ENCODE measurements at regions of chr19 and their contacts with region 1.

Region 1: GRCh38 chr19:36605101-36605876 is at the start of gene ZNF382:
- DNase-seq: peak; percentile 85
- ATAC-seq: peak; percentile 80
- H3K4me3 Mint-ChIP-seq: peak within 1 kb of the TSS; percentile 97
- H3K27ac Mint-ChIP-seq: peak within 1 kb of the TSS; percentile 97
- H3K4me1 Mint-ChIP-seq: peaks cover 28% of the 10 kb centered on the region
- H3K27me3 Mint-ChIP-seq: no peaks in the 10 kb centered on the region
- CTCF ChIP-seq: no peak
- total RNA-seq, gene ZNF382: 11.5 and 14.4 TPM in 2 replicates

Region 2: DNA sequence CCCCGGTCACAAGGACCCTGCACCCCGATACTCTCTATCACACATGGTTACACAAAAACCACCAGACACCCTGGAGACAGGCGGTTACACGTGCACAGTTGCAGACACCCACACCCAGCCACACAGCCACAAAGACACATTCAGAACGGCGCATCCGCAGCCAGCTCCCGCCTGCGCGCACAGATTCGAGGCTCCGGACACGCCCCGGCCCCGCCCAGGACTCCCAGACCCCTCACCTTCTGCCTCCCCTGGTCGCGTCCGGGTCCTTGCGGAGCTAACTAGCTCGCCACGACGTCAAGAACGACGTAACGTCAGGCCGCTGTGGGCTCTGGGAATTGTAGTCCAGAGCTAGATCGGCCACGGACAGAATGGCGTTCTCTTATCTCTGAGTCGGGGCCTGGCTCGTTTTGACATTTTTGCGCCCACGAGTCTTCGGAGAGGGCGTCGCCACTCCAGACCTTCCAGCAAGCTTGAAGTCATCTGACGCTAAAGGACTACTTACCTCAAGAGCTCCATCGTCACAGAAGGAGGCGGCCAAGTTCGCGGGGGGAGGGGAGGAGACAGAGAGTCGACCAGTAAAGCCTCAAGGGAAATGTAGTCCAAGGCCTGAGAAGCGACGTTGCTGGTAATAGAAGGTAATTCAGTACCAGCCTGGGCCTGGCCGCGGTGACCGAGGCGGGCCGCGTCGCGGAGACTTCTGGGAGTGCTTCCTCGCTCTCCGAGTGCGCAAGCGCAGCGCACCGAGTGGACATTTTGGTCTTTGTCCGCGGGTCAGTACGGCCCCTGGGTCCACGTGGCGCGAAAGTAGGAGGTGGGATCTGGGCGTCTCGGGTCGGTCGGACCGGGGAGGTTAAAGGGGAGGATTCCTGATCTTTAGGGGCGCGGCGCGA is 390.7 kb before region 1 on chr19 and contains the starts of genes ZNF146 and ZNF565:
- CTCF ChIA-PET with region 1: no interaction called
- POLR2A ChIA-PET with region 1: interaction called, 12 read pairs
- intact Hi-C with region 1: no loop called
- DNase-seq: peak; percentile 90
- ATAC-seq: peak; percentile 90
- H3K4me3 Mint-ChIP-seq: no peak within 1 kb of the TSS
- H3K27ac Mint-ChIP-seq: no peak within 1 kb of the TSS
- H3K4me1 Mint-ChIP-seq: peaks cover 29% of the 10 kb centered on the region
- H3K27me3 Mint-ChIP-seq: no peaks in the 10 kb centered on the region
- CTCF ChIP-seq: no peak
- total RNA-seq, gene ZNF146: 57.8 and 63.2 TPM in 2 replicates
- total RNA-seq, gene ZNF565: 2.3 and 3.2 TPM in 2 replicates

Region 3: DNA sequence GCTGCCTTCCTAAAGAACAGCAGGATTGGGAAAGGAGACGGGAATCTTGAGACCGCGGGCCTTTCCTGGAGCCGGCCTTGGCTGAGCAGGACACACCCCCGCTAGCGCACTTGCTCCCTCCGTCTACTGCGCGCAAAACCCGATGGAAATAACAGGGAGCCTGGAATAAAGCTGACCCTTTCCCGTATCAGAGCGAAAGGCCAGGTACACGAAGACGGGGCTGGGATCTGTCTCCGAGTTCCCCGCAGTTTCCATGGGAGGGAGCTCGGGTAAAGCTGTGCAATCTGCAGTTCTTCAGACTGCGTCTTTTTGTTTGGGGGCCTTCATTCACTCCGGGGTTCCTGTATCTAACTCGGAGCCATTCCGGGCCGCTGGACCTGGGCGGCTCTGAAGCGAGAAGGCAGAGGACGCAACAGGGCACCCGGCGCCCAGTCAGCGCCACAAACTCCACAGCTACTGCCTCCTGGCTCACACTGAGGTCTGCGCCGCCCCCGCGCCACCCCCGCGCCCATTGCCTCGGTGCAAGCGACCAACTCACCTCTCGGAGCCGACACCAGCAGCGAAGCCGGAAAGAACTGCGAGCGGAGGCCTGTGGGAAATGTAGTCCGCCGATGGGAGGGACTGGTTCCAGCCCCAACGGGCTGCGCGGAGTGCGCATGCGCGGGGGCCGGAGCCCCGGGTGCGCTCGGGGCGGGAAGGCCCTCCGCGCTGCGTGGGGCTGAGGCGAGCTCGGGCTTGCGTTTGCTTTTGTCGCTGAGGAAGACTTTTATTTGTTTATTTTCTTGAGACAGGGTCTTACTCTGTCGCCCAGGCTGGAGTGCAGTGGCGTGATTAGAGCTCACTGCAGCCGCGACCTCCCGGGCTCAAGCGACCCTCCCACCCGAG is 226.4 kb before region 1 on chr19 and contains the start of gene ZFP14:
- CTCF ChIA-PET with region 1: no interaction called
- POLR2A ChIA-PET with region 1: interaction called, 9 read pairs
- intact Hi-C with region 1: loop called (anchors 1 kb)
- DNase-seq: peak; percentile 92
- ATAC-seq: peak; percentile 99
- H3K4me3 Mint-ChIP-seq: peak within 1 kb of the TSS; percentile 94
- H3K27ac Mint-ChIP-seq: peak within 1 kb of the TSS; percentile 96
- H3K4me1 Mint-ChIP-seq: peaks cover 21% of the 10 kb centered on the region
- H3K27me3 Mint-ChIP-seq: no peaks in the 10 kb centered on the region
- CTCF ChIP-seq: no peak
- total RNA-seq, gene ZFP14: 7.7 and 10.4 TPM in 2 replicates

Region 4: GRCh38 chr19:36528194-36528920 is 76.9 kb before region 1 on chr19 and contains the start of gene ZNF260:
- CTCF ChIA-PET with region 1: no interaction called
- POLR2A ChIA-PET with region 1: interaction called, 26 read pairs
- intact Hi-C with region 1: loop called (anchors 1 kb)
- DNase-seq: peak; percentile 94
- ATAC-seq: peak; percentile 89
- H3K4me3 Mint-ChIP-seq: peak within 1 kb of the TSS; percentile 99
- H3K27ac Mint-ChIP-seq: peak within 1 kb of the TSS; percentile 99
- H3K4me1 Mint-ChIP-seq: peaks cover 27% of the 10 kb centered on the region
- H3K27me3 Mint-ChIP-seq: no peaks in the 10 kb centered on the region
- CTCF ChIP-seq: no peak
- total RNA-seq, gene ZNF260: 9.8 and 13.6 TPM in 2 replicates

Region 5: DNA sequence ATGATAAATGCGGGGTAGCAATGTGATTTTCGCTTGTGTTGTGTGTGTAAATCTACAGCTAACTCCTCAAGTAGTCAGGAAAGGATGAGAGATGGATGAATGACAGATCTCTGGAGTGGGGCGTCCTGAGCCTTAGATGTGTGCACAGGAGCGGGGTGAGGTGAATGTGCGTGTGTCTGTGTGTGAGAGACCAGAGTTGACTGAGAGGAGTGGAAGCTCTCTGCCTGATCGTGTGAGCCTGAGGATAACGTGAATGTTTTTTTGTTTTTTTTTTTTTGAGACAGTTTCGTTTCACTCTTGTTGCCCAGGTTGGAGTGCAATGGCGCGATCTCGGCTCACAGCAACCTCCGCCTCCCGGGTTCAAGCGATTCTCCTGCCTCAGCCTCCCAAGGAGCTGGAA is 60.5 kb after region 1 on chr19:
- CTCF ChIA-PET with region 1: no interaction called
- POLR2A ChIA-PET with region 1: interaction called, 10 read pairs
- intact Hi-C with region 1: loop called (anchors 5 kb)
- DNase-seq: no peak
- ATAC-seq: no peak
- H3K4me3 Mint-ChIP-seq: peak overlapping the region; percentile 98
- H3K27ac Mint-ChIP-seq: peak overlapping the region; percentile 72
- H3K4me1 Mint-ChIP-seq: peaks cover 31% of the 10 kb centered on the region
- H3K27me3 Mint-ChIP-seq: no peaks in the 10 kb centered on the region
- CTCF ChIP-seq: no peak

Region 6: DNA sequence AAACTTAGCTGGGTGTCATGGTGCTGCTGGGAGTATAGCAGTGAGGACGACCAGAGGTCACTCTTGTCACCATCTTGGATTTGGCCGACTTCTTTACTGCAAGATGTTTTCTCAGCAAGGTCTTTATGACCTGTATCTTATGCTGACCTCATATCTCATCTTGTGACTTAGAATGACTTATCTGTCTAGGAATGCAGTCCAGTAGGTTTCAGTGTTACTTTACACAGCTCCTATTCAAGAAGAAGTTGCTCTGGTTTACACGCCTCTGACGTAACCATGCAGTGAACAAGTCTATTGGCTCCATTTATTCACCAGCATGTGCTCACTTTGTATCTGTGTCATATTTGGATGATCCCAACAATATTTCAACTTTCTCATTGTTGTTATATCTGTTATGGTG is 140.6 kb after region 1 on chr19:
- CTCF ChIA-PET with region 1: no interaction called
- POLR2A ChIA-PET with region 1: no interaction called
- intact Hi-C with region 1: no loop called
- DNase-seq: no peak
- ATAC-seq: no peak
- H3K4me3 Mint-ChIP-seq: no peak overlapping the region
- H3K27ac Mint-ChIP-seq: no peak overlapping the region
- H3K4me1 Mint-ChIP-seq: no peaks in the 10 kb centered on the region
- H3K27me3 Mint-ChIP-seq: no peaks in the 10 kb centered on the region
- CTCF ChIP-seq: no peak

Region 7: GRCh38 chr19:36837906-36838783 is 232.9 kb after region 1 on chr19 and contains the start of gene ZNF790:
- CTCF ChIA-PET with region 1: no interaction called
- POLR2A ChIA-PET with region 1: no interaction called
- intact Hi-C with region 1: loop called (anchors 1 kb)
- DNase-seq: peak; percentile 76
- ATAC-seq: peak; percentile 94
- H3K4me3 Mint-ChIP-seq: no peak within 1 kb of the TSS
- H3K27ac Mint-ChIP-seq: no peak within 1 kb of the TSS
- H3K4me1 Mint-ChIP-seq: peaks cover 2% of the 10 kb centered on the region
- H3K27me3 Mint-ChIP-seq: no peaks in the 10 kb centered on the region
- CTCF ChIP-seq: no peak
- total RNA-seq, gene ZNF790: 10.3 and 11.5 TPM in 2 replicates

Region 8: GRCh38 chr19:36915992-36916830 is 310.9 kb after region 1 on chr19 and contains the starts of genes ZNF568 and ZNF829:
- CTCF ChIA-PET with region 1: no interaction called
- POLR2A ChIA-PET with region 1: no interaction called
- intact Hi-C with region 1: loop called (anchors 10 kb)
- DNase-seq: peak; percentile 87
- ATAC-seq: peak; percentile 93
- H3K4me3 Mint-ChIP-seq: peak within 1 kb of the TSS; percentile 91
- H3K27ac Mint-ChIP-seq: peak within 1 kb of the TSS; percentile 91
- H3K4me1 Mint-ChIP-seq: peaks cover 26% of the 10 kb centered on the region
- H3K27me3 Mint-ChIP-seq: no peaks in the 10 kb centered on the region
- CTCF ChIP-seq: no peak
- total RNA-seq, gene ZNF568: 12.0 and 13.4 TPM in 2 replicates
- total RNA-seq, gene ZNF829: 7.3 and 7.6 TPM in 2 replicates

Measured in activated B cell treated with CpG ODN at 0.5 μM for 24 hours (primary cell).